Sciatic nerve (tissue), 2 donors: ENCODE measurements at regions of chr6 and their contacts with region 1.

Region 1: DNA sequence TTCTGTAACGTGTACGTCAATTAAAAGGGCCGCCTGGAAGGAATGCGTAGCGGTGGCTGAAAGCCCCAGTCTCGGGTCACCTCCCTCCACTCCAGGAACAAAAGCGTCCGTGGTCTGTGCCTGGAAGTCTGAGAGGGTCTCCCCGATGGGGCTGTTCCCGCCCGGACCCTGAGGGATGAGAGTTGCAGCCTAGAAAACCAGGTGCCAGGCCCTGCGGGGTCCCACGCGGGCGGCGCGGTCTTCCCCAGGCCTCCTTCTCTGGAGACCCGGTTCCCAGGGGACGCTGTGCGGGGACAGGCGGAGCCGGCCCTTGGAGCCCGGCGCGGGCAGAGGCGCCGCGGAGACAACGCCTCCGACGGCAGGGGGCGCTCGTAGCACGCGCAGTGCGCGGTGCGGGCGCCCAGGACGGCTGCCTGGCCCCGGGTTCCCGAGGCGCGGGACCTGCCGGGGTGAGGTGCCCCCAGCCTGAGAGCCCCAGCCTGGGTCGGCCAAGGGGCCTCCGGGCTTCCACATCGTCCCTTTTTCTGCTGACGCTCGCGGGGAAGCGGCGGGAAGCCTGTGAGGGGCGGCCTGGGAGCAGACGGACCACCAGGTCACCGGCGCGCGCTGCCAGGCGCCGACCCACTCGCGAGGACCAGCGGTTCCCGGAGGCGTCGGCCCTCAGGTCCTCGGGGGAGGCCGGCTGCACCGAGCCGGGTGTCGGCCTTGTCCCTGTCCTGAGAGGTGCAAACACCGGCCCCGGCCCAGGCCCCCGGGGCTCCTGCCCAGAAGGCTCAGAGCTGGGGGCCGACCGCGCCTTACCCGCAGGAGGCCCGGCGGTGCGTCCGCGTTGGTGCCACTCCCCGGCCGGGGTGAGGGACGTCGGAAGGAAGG is 5.3 kb upstream of the FOXC1 start:
- DNase-seq: peak; percentile 85
- ATAC-seq: peak; percentile 65

Region 2: DNA sequence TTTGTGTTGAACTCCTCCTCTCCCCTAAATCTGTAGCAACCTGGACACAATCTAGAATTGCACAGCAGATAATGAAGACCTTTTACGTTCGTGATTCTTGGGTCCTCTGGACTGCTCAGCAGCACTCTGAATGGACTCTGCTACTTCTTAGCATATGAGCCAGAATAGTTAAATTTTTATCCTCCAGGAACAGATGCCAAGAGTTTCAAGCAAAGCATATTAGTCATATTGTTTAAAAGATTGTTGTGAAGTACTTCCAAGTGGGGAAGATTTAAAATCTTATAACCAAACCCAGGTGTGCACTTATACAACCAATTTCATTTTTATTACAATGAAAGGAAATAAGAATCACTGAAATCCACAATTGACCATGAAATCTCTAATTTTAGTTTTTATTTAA is 792.6 kb before region 1 on chr6:
- intact Hi-C with region 1: no loop called
- DNase-seq: no peak
- ATAC-seq: no peak

Region 3: GRCh38 chr6:1552296-1552761 is 52.1 kb before region 1 on chr6:
- intact Hi-C with region 1: no loop called
- DNase-seq: no peak
- ATAC-seq: no peak

Region 4: DNA sequence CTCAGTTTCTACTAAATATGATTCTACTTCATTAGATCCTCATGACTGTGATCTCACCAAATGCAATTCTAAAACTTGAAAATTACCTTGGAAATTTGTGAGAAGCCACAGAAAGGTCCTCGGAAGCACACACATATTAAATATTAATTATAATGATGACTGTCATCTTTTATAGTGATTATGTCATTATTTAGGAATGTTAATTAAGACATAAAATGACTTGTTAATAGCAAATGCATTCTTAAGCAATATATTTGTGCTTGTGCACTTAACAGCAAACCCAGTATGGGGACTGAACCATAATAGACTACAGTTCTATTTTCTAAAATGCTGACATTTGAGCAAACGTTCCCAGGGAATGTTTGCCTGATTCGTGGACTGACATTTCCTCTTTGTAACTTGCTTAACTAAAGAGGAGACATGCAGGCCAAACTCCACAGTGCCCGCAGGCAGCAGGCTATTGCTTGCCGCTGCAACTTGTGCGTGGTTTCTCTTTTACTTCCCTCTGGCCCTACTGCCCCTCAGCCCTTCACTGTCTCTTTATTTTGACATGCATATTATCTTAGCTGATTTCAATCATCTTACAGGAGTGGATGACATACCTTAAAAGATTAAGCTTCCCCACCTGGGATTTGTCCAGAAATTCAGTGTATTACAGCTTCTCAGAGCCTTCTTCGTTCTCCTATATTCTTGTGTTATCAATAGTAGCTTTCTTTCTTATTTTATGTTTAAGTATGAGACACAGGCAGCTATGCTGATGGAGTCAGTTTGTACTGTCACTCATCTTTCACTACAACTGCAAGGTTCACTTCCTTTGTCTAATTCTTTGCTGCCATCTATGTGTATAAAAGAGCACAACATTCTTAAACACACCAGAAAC is 499.5 kb after region 1 on chr6:
- intact Hi-C with region 1: loop called (anchors 5 kb)
- DNase-seq: no peak
- ATAC-seq: peak; percentile 89

Region 5: GRCh38 chr6:2196079-2196679 is 591.8 kb after region 1 on chr6:
- intact Hi-C with region 1: loop called (anchors 5 kb)
- DNase-seq: no peak
- ATAC-seq: peak; percentile 83

Region 6: GRCh38 chr6:2353412-2354137 is 749.2 kb after region 1 on chr6:
- intact Hi-C with region 1: loop called (anchors 5 kb)
- DNase-seq: peak; percentile 79
- ATAC-seq: peak; percentile 90

Region 7: GRCh38 chr6:2639896-2640295 is 1035.5 kb after region 1 on chr6:
- intact Hi-C with region 1: loop called (anchors 5 kb)
- DNase-seq: no peak
- ATAC-seq: no peak